Left colon (tissue), 2 donors: ENCODE measurements at regions of chr12 and their contacts with region 1.

Region 1: GRCh38 chr12:55619354-55620138 is 17.1 kb upstream of the OR10P1 start:
- DNase-seq: no peak
- ATAC-seq: peak; percentile 94

Region 2: DNA sequence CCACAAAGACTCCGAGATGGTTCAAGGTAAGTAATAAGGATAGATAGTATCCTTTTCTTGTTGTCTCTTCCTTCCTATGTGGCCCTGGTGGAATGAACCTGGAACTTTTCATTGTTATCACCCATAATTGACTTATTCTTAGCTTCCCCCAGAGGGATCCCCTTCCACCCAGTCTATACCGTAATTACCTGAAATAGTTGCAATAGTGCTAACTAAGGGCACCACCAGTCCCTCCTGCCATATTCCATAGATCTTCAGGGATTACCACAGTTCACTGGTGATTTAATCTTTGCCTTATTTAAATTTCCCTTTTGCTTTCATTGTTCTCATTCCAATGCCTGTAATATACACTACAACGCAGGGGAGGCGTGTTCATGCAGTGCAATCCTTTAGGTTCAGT is 507.2 kb before region 1 on chr12:
- intact Hi-C with region 1: no loop called
- DNase-seq: no peak
- ATAC-seq: no peak

Region 3: GRCh38 chr12:55188974-55189556 is 430.5 kb before region 1 on chr12:
- intact Hi-C with region 1: loop called (anchors 5 to 10 kb)
- DNase-seq: peak in 1 of 2 donors; percentile 5
- ATAC-seq: peak; percentile 76

Region 4: DNA sequence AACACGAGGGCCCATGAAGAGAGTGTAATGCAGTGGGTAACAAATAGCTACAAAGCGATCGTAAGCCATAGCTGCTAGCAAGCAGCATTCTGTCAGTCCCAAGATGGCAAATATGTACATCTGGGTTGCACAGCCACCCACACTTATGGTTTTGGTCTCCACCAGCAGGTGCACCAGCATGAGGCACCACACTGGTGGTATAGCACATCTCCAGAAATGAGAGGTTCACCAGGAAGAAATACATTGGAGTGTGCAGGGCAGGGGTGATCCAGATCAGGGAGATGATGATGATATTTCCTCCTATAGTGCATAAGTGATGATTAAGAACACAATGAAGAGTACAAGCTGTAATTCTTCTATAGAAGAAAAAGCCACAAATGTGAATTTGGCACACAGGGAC is 425.2 kb before region 1 on chr12:
- intact Hi-C with region 1: loop called (anchors 5 to 10 kb)
- DNase-seq: no peak
- ATAC-seq: no peak

Region 5: DNA sequence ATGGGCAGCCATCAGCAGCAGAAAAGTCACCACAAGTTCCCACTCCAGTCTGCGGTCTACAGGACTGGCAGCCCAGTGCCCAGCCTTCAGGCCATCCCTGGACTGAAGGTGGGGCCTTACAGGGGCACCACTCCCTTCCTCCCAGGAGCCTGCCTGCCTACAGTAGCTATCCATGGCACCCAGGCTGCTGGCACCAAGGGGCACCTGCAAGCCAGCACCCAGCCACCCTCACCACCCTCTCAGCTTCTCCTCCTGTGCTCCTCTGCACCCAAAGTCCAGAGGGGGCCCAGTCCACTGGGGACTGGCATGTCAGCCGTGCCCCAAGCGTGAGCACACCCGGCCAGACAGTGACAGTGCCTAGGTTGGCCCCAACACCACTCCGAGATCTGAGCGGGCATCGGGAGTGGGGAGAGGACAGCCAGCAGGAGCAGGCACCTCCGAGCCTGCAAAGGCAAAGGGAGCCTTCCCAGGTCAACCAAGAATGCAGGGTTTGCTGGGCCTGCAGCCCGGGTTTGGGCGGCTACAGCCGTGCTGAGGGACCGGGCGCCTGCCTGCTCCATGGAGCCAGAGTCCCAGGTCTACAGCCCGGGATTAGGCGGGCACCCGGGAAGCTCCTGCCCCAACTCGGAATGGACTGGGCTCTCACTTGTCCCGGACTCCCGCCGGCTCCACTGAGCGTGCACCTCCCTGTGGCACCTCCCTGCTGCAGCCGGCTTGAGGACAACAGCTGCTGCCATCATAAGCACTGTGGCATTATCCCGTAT is 227.3 kb before region 1 on chr12:
- intact Hi-C with region 1: no loop called
- DNase-seq: no peak
- ATAC-seq: no peak

Region 6: DNA sequence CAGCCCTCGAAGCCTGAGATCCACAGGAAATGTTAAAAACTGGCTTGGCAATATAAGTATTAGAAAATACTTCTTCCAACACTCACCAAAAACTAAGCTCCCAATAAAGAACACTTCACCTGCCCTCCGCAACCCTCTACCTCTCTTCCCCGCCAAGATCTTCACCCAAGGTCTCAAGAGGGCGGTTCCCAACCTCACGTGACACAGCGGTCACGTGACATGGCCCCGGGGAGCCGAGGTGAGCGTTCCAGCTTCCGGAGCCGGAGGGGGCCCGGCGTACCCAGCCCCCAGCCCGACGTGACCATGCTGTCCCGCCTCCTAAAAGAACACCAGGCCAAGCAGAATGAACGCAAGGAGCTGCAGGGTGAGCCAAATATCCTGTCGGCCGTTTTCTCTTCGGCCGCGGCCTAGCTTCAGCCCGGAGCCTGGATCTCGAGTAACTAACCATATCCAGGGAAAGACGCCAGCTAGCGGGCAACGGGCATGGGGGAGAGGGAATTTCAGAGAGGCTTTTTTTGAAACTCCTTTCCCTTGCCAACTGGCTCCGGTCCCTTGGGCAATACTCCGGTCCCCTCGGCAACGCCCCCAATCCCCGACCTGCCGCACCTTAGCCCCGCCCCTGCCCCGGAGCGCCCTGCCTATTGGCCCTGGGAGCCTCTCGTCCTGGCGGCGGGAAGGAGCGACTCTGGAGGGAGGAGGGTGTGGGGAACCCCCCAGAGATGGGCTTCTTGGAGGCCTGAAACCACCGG is 96.5 kb after region 1 on chr12 and contains the start of gene BLOC1S1:
- intact Hi-C with region 1: no loop called
- DNase-seq: peak; percentile 95 to 96
- ATAC-seq: peak; percentile 69
- total RNA-seq, gene BLOC1S1: 266 to 300 TPM